Heart right ventricle (tissue), 16 donors: ENCODE measurements at regions of chrX and their contacts with region 1.

Region 1: GRCh38 chrX:70196961-70197805 is 19.9 kb downstream of the DGAT2L6 start:
- DNase-seq: peak in 1 of 2 donors; percentile 19
- ATAC-seq: peak in 2 of 8 donors; percentile 34 to 41
- H3K4me3 ChIP-seq: no peak overlapping the region
- H3K27ac ChIP-seq: no peak overlapping the region
- H3K4me1 ChIP-seq: no peaks in the 10 kb centered on the region
- H3K27me3 ChIP-seq: peaks cover 0 to 24% (median 0%) of the 10 kb centered on the region in 7 donors
- CTCF ChIP-seq: peak; percentile 23 to 70 (median 53)

Region 2: GRCh38 chrX:70262952-70263567 is 65.9 kb after region 1 on chrX:
- intact Hi-C with region 1: loop called in 2 of 10 experiments (anchors 1 to 5 kb)
- DNase-seq: peak; percentile 5 to 14
- ATAC-seq: peak in 2 of 8 donors; percentile 39 to 50
- H3K4me3 ChIP-seq: no peak overlapping the region
- H3K27ac ChIP-seq: no peak overlapping the region
- H3K4me1 ChIP-seq: no peaks in the 10 kb centered on the region
- H3K27me3 ChIP-seq: peaks cover 0 to 8% (median 0%) of the 10 kb centered on the region in 7 donors
- CTCF ChIP-seq: peak in 7 of 9 donors; percentile 37 to 59 (median 45)

Region 3: GRCh38 chrX:70422851-70423341 is 225.7 kb after region 1 on chrX and contains the start of gene GDPD2:
- intact Hi-C with region 1: loop called in 1 of 10 experiments (anchors 10 kb)
- DNase-seq: no peak
- ATAC-seq: peak in 7 of 8 donors; percentile 29 to 75 (median 70)
- H3K4me3 ChIP-seq: no peak within 1 kb of the TSS
- H3K27ac ChIP-seq: no peak within 1 kb of the TSS
- H3K4me1 ChIP-seq: no peaks in the 10 kb centered on the region
- H3K27me3 ChIP-seq: peaks cover 0 to 41% (median 0%) of the 10 kb centered on the region in 7 donors
- CTCF ChIP-seq: peak in 3 of 9 donors; percentile 28 to 38 (median 32)
- total RNA-seq, gene GDPD2: not detected

Region 4: DNA sequence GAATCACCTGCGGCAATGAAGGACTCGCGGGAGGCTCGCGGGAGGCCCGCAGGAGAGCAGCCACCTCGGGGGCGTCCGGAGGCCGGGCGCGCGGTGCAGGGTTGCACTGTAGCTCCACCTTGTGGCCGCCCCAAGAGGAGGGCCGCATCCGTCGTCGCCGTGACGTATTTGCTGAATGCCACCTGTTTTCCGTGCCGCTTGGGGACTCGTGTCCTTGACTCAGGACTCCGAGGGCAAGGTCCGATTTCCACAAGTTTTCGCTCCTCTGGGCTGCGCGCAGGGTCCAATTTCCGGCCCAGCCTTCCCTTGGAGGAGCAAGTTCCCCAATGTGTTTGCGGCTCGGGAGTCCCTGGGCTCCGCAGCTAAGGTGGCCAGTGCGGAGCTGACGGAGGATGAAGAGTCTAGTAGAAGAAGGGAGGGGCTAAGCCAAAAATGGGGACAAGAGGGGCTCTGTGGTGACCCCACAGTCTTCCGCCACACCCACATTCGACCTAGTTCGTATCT is 236.7 kb after region 1 on chrX:
- intact Hi-C with region 1: loop called in 2 of 10 experiments (anchors 2 to 10 kb)
- DNase-seq: peak; percentile 60 to 70
- ATAC-seq: peak; percentile 63 to 90 (median 80)
- H3K4me3 ChIP-seq: peak overlapping the region; percentile 49 to 80 (median 70)
- H3K27ac ChIP-seq: peak overlapping the region; percentile 4 to 89 (median 85)
- H3K4me1 ChIP-seq: peaks cover 0 to 17% (median 9%) of the 10 kb centered on the region in 9 donors
- H3K27me3 ChIP-seq: peaks cover 0 to 38% (median 0%) of the 10 kb centered on the region in 7 donors
- CTCF ChIP-seq: peak; percentile 58 to 84 (median 69)

Region 5: DNA sequence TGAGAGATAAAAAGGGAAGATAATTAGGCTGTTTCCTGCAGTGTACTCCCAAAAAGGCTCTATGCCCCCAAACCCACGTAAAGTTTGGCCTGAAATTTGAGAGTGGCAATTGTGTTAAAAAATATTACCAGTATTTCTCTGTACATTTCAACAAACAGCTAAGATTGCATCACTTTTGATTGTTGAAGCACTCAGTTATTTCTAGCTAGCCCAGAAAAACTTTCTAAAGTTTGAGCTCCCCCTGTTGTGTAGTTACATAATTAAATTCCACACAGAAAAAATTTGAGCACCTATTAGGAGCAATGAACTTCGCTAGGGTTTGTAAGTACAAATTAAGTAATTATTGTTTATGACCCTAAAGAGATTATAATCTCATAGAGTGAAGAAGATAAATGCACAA is 356.9 kb after region 1 on chrX:
- intact Hi-C with region 1: no loop called
- DNase-seq: no peak
- ATAC-seq: no peak
- H3K4me3 ChIP-seq: no peak overlapping the region
- H3K27ac ChIP-seq: no peak overlapping the region
- H3K4me1 ChIP-seq: no peaks in the 10 kb centered on the region
- H3K27me3 ChIP-seq: peaks cover 0 to 12% (median 0%) of the 10 kb centered on the region in 7 donors
- CTCF ChIP-seq: peak in 6 of 9 donors; percentile 23 to 45 (median 29)

Region 6: GRCh38 chrX:70592091-70592490 is 394.9 kb after region 1 on chrX:
- intact Hi-C with region 1: no loop called
- DNase-seq: no peak
- ATAC-seq: no peak
- H3K4me3 ChIP-seq: no peak overlapping the region
- H3K27ac ChIP-seq: no peak overlapping the region
- H3K4me1 ChIP-seq: no peaks in the 10 kb centered on the region
- H3K27me3 ChIP-seq: peaks cover 0 to 2% (median 0%) of the 10 kb centered on the region in 7 donors
- CTCF ChIP-seq: no peak